ENCODE measurements at regions of chr12 and their contacts with region 1.

Region 1: DNA sequence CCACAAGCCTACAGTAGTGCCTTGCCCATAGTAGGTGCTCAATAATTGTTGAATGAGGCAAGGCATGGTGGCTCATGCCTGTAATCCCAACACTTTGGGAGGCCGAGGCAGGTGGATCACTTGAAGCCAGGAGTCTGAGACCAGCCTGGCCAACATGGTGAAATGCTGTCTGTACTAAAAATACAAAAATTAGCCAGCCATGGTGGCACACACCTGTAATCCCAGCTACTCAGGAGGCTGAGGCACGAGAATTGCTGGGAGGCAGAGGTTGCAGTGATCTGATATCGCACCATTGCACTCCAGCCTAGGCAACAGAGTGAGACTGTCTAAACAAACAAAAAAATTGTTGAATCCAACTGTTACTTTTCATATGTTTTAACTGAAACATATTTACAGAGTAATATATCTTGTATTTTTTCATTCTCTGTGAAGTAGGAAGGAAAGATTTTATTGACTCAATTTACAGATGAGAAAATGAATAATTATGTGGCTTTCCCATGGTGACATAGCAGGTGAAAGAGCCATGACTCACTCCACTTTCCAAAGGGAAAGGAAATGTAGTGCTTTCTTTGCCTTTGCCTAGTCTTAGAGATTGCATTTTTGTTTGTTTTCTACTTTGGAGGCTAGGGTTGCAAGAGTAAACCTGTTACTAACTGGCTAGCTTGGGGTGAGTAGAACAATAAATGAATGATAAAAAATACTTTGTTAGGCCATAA is 95.4 kb upstream of the SLC38A4 start:
- DNase-seq: no peak
- H3K4me3 ChIP-seq: no peak overlapping the region
- H3K27ac ChIP-seq: peak overlapping the region in 1 of 2 donors; percentile 43
- H3K4me1 ChIP-seq: no peaks in the 10 kb centered on the region
- H3K27me3 ChIP-seq: no peaks in the 10 kb centered on the region
- CTCF ChIP-seq: no peak
- POLR2A ChIP-seq: no peak

Region 2: DNA sequence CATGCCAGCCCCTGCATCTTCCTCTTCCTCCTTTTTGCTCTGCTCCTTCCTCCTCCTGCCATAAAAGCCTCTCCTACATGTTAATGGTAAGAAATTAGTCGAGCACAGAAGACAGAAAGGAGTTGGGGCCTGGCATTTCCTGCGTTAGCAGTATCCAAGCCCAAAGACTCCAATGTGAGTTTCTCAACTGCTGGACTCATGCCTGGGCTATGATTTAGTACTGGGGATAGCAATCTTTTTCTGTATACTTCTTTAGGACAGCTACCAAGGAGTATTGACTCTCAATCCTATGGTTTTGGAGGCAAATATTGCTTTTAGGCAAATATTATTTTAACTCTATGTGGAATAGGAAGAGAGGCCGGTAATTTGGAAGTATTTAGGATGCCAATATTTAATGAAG is 77.4 kb before region 1 on chr12:
- intact Hi-C with region 1: loop called (anchors 2 kb)
- DNase-seq: no peak
- H3K4me3 ChIP-seq: no peak overlapping the region
- H3K27ac ChIP-seq: no peak overlapping the region
- H3K4me1 ChIP-seq: no peaks in the 10 kb centered on the region
- H3K27me3 ChIP-seq: no peaks in the 10 kb centered on the region
- CTCF ChIP-seq: no peak
- POLR2A ChIP-seq: no peak

Region 3: GRCh38 chr12:46900734-46901463 is 20.3 kb before region 1 on chr12:
- intact Hi-C with region 1: loop called (anchors 2 kb)
- DNase-seq: no peak
- H3K4me3 ChIP-seq: no peak overlapping the region
- H3K27ac ChIP-seq: no peak overlapping the region
- H3K4me1 ChIP-seq: no peaks in the 10 kb centered on the region
- H3K27me3 ChIP-seq: no peaks in the 10 kb centered on the region
- CTCF ChIP-seq: no peak
- POLR2A ChIP-seq: no peak

Measured in breast epithelium (tissue), 4 donors.